ENCODE measurements at regions of chr22 and their contacts with region 1.

Region 1: GRCh38 chr22:26461188-26461810 is 22.3 kb downstream of the HPS4 start:
- DNase-seq: peak in 4 of 5 donors; percentile 19 to 57 (median 26)
- H3K4me3 ChIP-seq: no peak overlapping the region
- H3K4me3 Mint-ChIP-seq: no peak overlapping the region
- H3K27ac ChIP-seq: no peak overlapping the region
- H3K27ac Mint-ChIP-seq: peak overlapping the region in 2 of 8 donors; percentile 43 to 93
- H3K4me1 ChIP-seq: no peaks in the 10 kb centered on the region
- H3K4me1 Mint-ChIP-seq: peaks cover 2 to 5% (median 2%) of the 10 kb centered on the region in 3 donors
- H3K27me3 ChIP-seq: no peaks in the 10 kb centered on the region
- H3K27me3 Mint-ChIP-seq: no peaks in the 10 kb centered on the region

Region 2: DNA sequence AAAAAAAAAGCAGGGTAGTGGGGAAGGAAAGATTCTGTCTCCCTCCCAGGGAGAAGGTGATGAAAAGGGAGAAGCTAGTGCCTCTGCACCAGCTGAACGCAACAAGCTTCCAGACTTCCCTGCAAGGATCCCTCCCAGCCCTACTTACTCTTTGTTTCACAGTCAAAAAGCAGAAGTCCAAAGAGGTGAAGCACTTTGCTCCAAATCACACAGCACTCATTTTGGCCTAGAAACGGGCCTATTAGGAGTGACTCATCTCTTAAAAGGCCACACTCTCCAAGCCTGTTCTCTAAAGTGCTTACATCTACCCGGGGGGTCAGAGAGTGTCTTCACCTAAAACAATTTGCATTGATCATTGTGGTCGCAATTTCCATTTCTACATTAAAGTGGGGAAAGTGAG is 914.5 kb before region 1 on chr22:
- CTCF ChIA-PET with region 1: no interaction called
- POLR2A ChIA-PET with region 1: no interaction called
- DNase-seq: no peak
- H3K4me3 ChIP-seq: no peak overlapping the region
- H3K4me3 Mint-ChIP-seq: no peak overlapping the region
- H3K27ac ChIP-seq: no peak overlapping the region
- H3K27ac Mint-ChIP-seq: no peak overlapping the region
- H3K4me1 ChIP-seq: no peaks in the 10 kb centered on the region
- H3K4me1 Mint-ChIP-seq: no peaks in the 10 kb centered on the region
- H3K27me3 ChIP-seq: no peaks in the 10 kb centered on the region
- H3K27me3 Mint-ChIP-seq: peaks cover under 1 to 8% of the 10 kb centered on the region in 2 donors

Region 3: DNA sequence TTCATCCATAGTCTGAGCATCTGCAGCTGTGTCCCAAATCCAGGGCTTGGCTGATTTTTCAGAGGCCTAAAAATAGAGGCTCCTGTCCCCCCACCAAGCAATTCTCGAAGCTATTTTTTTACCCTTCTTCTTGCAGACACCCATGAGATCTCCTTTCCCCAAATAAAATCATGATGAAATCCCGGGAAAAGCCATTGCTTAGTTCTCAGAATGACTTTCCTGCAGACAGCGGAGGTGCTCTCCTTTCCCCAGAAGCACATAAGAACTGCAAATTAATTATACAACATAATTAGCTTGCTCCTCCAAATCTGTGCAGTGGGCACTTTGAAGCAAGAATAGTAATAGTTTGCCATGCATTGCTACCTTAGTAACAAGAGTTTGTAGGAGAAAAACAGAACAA is 115.8 kb before region 1 on chr22:
- CTCF ChIA-PET with region 1: no interaction called
- POLR2A ChIA-PET with region 1: no interaction called
- DNase-seq: no peak
- H3K4me3 ChIP-seq: no peak overlapping the region
- H3K4me3 Mint-ChIP-seq: no peak overlapping the region
- H3K27ac ChIP-seq: no peak overlapping the region
- H3K27ac Mint-ChIP-seq: no peak overlapping the region
- H3K4me1 ChIP-seq: no peaks in the 10 kb centered on the region
- H3K4me1 Mint-ChIP-seq: no peaks in the 10 kb centered on the region
- H3K27me3 ChIP-seq: no peaks in the 10 kb centered on the region
- H3K27me3 Mint-ChIP-seq: peaks cover 12 to 45% of the 10 kb centered on the region in 2 donors

Region 4: GRCh38 chr22:26364066-26365015 is 97.0 kb before region 1 on chr22:
- CTCF ChIA-PET with region 1: interaction called, 15 read pairs
- POLR2A ChIA-PET with region 1: no interaction called
- DNase-seq: peak; percentile 22 to 55 (median 38)
- H3K4me3 ChIP-seq: no peak overlapping the region
- H3K4me3 Mint-ChIP-seq: no peak overlapping the region
- H3K27ac ChIP-seq: no peak overlapping the region
- H3K27ac Mint-ChIP-seq: no peak overlapping the region
- H3K4me1 ChIP-seq: peaks cover 7% of the 10 kb centered on the region
- H3K4me1 Mint-ChIP-seq: peaks cover 6 to 7% (median 7%) of the 10 kb centered on the region in 3 donors
- H3K27me3 ChIP-seq: peaks cover 4% of the 10 kb centered on the region
- H3K27me3 Mint-ChIP-seq: peaks cover 14 to 32% of the 10 kb centered on the region in 2 donors

Region 5: DNA sequence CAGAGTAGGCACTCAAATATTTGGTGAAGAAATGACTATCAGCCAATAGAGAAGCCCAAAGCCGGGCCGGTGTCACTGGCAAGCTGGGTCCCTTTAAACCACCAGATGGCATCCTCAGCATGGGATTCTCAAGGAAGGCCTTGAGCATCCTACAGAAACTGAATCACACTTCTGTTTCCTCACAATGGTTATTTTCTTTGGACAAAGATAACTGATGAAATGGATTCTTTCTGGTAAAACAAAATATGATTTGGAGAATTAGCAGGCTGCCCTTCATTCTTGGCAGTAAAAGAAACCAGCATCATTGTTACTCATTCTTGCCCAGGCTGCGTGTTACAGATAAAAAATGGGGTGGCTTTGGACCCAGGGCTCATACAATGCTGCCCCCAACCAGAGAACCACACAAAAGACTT is 62.6 kb before region 1 on chr22:
- CTCF ChIA-PET with region 1: interaction called, 13 read pairs
- POLR2A ChIA-PET with region 1: no interaction called
- DNase-seq: peak; percentile 10 to 63 (median 30)
- H3K4me3 ChIP-seq: no peak overlapping the region
- H3K4me3 Mint-ChIP-seq: no peak overlapping the region
- H3K27ac ChIP-seq: no peak overlapping the region
- H3K27ac Mint-ChIP-seq: peak overlapping the region in 1 of 8 donors; percentile 33
- H3K4me1 ChIP-seq: no peaks in the 10 kb centered on the region
- H3K4me1 Mint-ChIP-seq: no peaks in the 10 kb centered on the region
- H3K27me3 ChIP-seq: no peaks in the 10 kb centered on the region
- H3K27me3 Mint-ChIP-seq: peaks cover 8% of the 10 kb centered on the region in 2 donors

Measured in CD8-positive, alpha-beta memory T cell (primary cell).